ENCODE measurements at regions of chr4 and their contacts with region 1.

Region 1: DNA sequence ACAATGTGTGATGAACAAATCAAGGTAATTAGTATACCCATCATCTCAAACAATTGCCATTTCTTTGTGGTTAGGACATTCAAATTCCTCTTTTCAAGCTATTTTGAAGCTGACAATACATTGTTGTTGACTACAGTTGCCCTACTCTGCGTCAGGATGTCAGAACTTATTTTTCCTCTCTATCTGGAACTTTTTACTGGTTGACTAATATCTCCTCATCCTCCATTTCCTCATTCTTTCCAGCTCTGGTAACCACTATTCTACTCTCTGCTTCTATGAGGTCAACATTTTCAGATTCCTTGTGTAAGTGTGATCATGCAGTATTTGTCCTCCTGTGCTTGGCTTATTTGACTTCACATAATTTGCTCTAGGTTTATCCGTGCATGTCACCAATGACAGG is 240.5 kb upstream of the HS3ST1 start:
- DNase-seq: peak in 1 of 2 experiments; percentile 69
- H3K4me3 ChIP-seq: no peak overlapping the region
- H3K27ac ChIP-seq: peak overlapping the region; percentile 43
- H3K4me1 ChIP-seq: no peaks in the 10 kb centered on the region
- H3K27me3 ChIP-seq: no peaks in the 10 kb centered on the region
- CTCF ChIP-seq: no peak

Region 2: DNA sequence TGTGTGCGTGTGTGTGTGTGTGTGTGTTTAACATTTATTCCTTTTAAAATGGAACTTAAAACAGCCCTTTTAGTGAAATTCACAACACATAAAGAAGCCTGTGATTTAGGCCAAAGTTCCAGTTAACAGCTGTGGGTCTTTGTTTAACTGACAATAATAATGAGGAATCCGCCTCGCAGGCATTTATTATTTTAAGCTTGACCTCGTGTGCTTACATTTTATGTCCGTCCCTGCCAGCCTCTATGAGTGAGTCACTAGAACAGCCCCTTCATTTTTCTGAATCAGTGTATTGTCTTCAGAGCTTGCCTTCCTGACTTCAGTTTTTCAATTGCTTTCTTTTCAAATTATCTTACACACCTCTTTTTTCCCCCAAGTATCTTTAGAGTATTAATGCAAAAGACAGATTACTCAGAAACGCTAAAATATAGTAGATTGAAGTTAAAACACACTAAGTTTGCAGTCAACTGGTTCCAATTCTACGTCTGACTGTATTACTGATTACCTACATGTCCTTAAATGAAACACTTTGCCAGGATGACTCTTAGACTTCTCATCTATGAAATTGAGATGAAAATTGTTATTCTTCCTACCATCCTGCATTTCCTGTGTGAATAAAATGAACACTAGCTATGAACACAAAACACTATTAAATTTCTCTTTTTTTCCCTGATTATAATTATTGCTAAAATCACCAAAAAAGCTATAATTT is 79.2 kb after region 1 on chr4:
- CTCF ChIA-PET with region 1: interaction called, 13 read pairs
- POLR2A ChIA-PET with region 1: no interaction called
- intact Hi-C with region 1: no loop called
- DNase-seq: peak in 1 of 2 experiments; percentile 6
- H3K4me3 ChIP-seq: no peak overlapping the region
- H3K27ac ChIP-seq: 0 out of 2 replicates have a peak overlapping the region, but pooled peaks have one; percentile 32
- H3K4me1 ChIP-seq: peaks cover 9% of the 10 kb centered on the region; the same call in 1 of the 2 replicates
- H3K27me3 ChIP-seq: no peaks in the 10 kb centered on the region
- CTCF ChIP-seq: no peak

Measured in PC-9 (cell line).